Sigmoid colon (tissue), 7 donors: ENCODE measurements at regions of chr4 and their contacts with region 1.

Region 1: DNA sequence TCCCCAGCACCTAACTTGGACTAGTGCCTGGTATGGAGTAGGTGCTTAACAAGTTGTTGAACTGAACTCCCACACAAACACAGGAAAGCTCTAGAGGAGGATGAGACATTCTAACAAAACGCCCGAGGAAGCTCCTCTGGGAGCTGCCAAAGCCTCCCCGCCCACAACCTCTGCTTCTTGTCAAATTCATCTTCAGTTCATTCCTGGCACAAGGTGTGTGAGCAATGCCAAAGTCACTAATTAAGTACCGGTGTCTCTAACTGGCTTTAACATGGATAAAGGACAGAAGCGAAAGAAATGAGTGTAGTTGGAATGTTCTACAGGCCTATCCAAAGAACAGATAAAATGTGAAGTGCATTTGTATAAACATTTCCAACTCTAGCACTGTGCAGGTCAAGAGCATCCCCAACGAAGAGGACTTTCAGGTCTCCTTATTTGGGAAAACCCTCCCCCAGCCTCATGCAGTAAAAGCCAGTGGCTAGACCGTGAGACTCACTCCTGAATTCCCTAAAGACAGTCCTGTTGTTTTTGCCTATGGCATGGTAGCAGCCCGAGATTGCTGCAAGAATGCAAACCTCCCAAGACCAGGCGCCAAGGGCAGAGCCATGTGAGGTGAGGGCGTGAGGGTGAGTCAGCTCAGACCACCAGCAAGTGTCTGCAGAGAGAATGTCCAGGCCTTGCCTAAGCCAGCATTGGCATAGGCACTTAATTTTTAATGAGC is 72.2 kb upstream of the KLF3 start:
- DNase-seq: peak; percentile 93
- H3K4me3 ChIP-seq: no peak overlapping the region
- H3K27ac ChIP-seq: peak overlapping the region; percentile 69 to 83 (median 76)
- H3K4me1 ChIP-seq: peaks cover 0 to 18% (median 15%) of the 10 kb centered on the region in 4 donors
- H3K27me3 ChIP-seq: no peaks in the 10 kb centered on the region
- CTCF ChIP-seq: no peak
- EP300 ChIP-seq: peak; percentile 83 to 96 (median 90)
- POLR2A ChIP-seq: no peak

Region 2: GRCh38 chr4:38055566-38055965 is 536.2 kb before region 1 on chr4:
- intact Hi-C with region 1: loop called (anchors 10 kb)
- DNase-seq: no peak
- H3K4me3 ChIP-seq: no peak overlapping the region
- H3K27ac ChIP-seq: peak overlapping the region; percentile 57 to 86 (median 72)
- H3K4me1 ChIP-seq: peaks cover 0 to 83% (median 65%) of the 10 kb centered on the region in 4 donors
- H3K27me3 ChIP-seq: no peaks in the 10 kb centered on the region
- CTCF ChIP-seq: no peak
- EP300 ChIP-seq: no peak
- POLR2A ChIP-seq: no peak

Region 3: DNA sequence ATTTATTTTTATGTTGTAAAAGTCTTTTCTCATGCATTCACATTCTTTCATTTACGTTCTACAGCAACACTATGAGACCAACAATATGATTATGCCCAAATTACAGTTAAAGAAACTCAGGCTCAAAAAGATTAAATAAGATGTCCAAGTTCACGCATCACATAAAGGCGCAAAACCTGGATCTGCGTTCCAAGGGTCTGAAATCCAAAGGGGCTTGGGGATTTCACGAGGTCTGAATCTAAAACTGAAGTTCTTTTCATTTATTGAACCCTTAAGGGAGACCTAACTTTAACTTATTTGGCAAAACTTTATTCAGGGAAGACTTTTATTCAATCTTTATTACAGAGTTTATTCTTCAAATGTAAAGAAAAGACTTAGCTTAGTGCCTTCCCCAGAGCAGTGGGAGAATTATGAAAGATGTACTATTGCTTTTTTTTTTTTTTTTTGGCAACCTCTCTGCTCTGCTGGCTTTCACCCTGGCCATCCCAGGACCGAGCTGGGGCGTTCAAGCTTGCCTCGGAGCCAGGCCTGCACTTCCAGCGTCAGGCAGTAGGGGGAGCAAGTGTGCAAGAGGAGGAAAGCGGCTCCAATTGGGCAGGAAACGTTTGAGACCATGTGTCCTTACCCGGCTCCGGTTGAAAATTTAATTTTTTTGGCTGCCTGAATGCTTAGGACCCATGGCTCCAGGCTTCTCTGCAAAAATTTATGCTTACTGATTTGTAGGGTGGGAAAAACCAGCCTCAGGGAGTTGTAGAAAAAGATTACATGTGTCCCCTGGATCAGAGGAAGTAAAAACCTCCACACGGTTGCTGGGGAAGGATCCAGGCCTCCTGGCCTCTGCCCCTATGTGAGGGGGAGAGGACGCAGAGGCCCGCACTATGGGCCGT is 272.1 kb before region 1 on chr4:
- intact Hi-C with region 1: loop called (anchors 5 kb)
- DNase-seq: peak; percentile 97
- H3K4me3 ChIP-seq: peak overlapping the region; percentile 7 to 36 (median 26)
- H3K27ac ChIP-seq: peak overlapping the region; percentile 74 to 91 (median 85)
- H3K4me1 ChIP-seq: peaks cover 0 to 21% (median 17%) of the 10 kb centered on the region in 4 donors
- H3K27me3 ChIP-seq: no peaks in the 10 kb centered on the region
- CTCF ChIP-seq: peak; percentile 93 to 99 (median 98)
- EP300 ChIP-seq: no peak
- POLR2A ChIP-seq: no peak

Region 4: GRCh38 chr4:38466401-38466800 is 125.4 kb before region 1 on chr4:
- intact Hi-C with region 1: no loop called
- DNase-seq: no peak
- H3K4me3 ChIP-seq: no peak overlapping the region
- H3K27ac ChIP-seq: no peak overlapping the region
- H3K4me1 ChIP-seq: peaks cover 0 to 14% (median 4%) of the 10 kb centered on the region in 4 donors
- H3K27me3 ChIP-seq: no peaks in the 10 kb centered on the region
- CTCF ChIP-seq: no peak
- EP300 ChIP-seq: no peak
- POLR2A ChIP-seq: no peak

Region 5: GRCh38 chr4:38663801-38664705 is 72.3 kb after region 1 on chr4 and contains the start of gene KLF3:
- intact Hi-C with region 1: loop called (anchors 1 kb)
- DNase-seq: peak; percentile 97
- H3K4me3 ChIP-seq: peak within 1 kb of the TSS; percentile 94 to 100 (median 98)
- H3K27ac ChIP-seq: peak within 1 kb of the TSS; percentile 99 to 100 (median 100)
- H3K4me1 ChIP-seq: peaks cover 0 to 50% (median 40%) of the 10 kb centered on the region in 4 donors
- H3K27me3 ChIP-seq: no peaks in the 10 kb centered on the region
- CTCF ChIP-seq: no peak
- EP300 ChIP-seq: peak in 2 of 4 donors; percentile 40 to 43
- POLR2A ChIP-seq: peak; percentile 52 to 54
- total RNA-seq, gene KLF3: 29.2 to 43.5 (median 38.0) TPM